Activated CD4-positive, alpha-beta memory T cell treated with anti-CD3 and anti-CD28 coated beads for 36 hours (primary cell): ENCODE measurements at regions of chr1 and their contacts with region 1.

Region 1: DNA sequence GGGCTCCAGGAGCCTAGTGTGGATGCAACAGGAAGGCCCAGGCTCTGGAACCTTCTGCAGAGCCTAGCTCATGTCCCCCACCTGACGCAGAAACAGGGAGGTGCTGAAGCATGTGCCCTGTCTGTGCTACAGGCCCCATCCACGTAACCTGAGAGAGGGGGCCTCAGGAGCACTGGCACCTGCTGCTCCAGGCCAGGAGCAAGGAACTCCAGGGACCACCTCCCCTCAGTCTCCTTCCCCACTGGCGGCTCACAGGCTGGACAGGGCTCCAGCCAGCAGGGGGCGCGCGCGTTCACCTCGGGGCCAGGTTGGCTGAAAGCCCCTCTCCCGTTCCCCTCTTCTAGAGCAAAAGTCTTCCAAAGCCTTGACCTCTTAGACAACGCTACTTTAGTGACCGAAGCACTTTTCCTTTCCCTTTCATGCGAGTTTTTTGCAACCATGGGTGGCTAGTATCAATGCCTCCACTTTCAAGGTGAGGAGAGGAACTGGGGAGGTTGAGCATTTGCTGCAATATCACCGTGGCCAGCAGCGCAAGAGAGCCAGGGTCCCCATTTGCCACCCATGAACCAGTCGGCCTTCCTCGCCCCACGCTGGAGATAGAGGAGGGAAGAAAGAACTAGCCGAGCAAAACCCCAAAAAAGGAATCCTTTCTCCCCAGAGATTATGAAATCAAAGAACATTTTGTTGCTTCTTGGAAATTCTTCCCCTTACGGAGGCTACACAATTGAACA is 52.4 kb upstream of the GPR157 start:
- DNase-seq: peak; percentile 77
- H3K4me3 Mint-ChIP-seq: peak overlapping the region; percentile 79
- H3K27ac Mint-ChIP-seq: no peak overlapping the region
- H3K4me1 Mint-ChIP-seq: peaks cover 7% of the 10 kb centered on the region
- H3K27me3 Mint-ChIP-seq: peaks cover 22% of the 10 kb centered on the region

Region 2: GRCh38 chr1:9086045-9086444 is 95.3 kb before region 1 on chr1:
- CTCF ChIA-PET with region 1: no interaction called
- POLR2A ChIA-PET with region 1: no interaction called
- intact Hi-C with region 1: no loop called
- DNase-seq: no peak
- H3K4me3 Mint-ChIP-seq: no peak overlapping the region
- H3K27ac Mint-ChIP-seq: no peak overlapping the region
- H3K4me1 Mint-ChIP-seq: no peaks in the 10 kb centered on the region
- H3K27me3 Mint-ChIP-seq: peaks cover 14% of the 10 kb centered on the region

Region 3: GRCh38 chr1:9135073-9135836 is 46.1 kb before region 1 on chr1:
- CTCF ChIA-PET with region 1: interaction called, 17 read pairs
- POLR2A ChIA-PET with region 1: no interaction called
- intact Hi-C with region 1: no loop called
- DNase-seq: no peak
- H3K4me3 Mint-ChIP-seq: no peak overlapping the region
- H3K27ac Mint-ChIP-seq: no peak overlapping the region
- H3K4me1 Mint-ChIP-seq: peaks cover 13% of the 10 kb centered on the region
- H3K27me3 Mint-ChIP-seq: peaks cover 3% of the 10 kb centered on the region

Region 4: GRCh38 chr1:9196129-9197040 is 15.0 kb after region 1 on chr1:
- CTCF ChIA-PET with region 1: interaction called, 15 read pairs
- POLR2A ChIA-PET with region 1: no interaction called
- intact Hi-C with region 1: loop called (anchors 2 kb)
- DNase-seq: peak; percentile 80
- H3K4me3 Mint-ChIP-seq: no peak overlapping the region
- H3K27ac Mint-ChIP-seq: no peak overlapping the region
- H3K4me1 Mint-ChIP-seq: peaks cover 16% of the 10 kb centered on the region
- H3K27me3 Mint-ChIP-seq: peaks cover 50% of the 10 kb centered on the region

Region 5: GRCh38 chr1:9234223-9235095 is 53.1 kb after region 1 on chr1 and contains the start of gene H6PD:
- CTCF ChIA-PET with region 1: interaction called, 10 read pairs
- POLR2A ChIA-PET with region 1: no interaction called
- intact Hi-C with region 1: no loop called
- DNase-seq: peak; percentile 77
- H3K4me3 Mint-ChIP-seq: peak within 1 kb of the TSS; percentile 86
- H3K27ac Mint-ChIP-seq: peak within 1 kb of the TSS; percentile 88
- H3K4me1 Mint-ChIP-seq: peaks cover 37% of the 10 kb centered on the region
- H3K27me3 Mint-ChIP-seq: no peaks in the 10 kb centered on the region
- total RNA-seq, gene H6PD: 9.3 to 10.4 TPM

Region 6: DNA sequence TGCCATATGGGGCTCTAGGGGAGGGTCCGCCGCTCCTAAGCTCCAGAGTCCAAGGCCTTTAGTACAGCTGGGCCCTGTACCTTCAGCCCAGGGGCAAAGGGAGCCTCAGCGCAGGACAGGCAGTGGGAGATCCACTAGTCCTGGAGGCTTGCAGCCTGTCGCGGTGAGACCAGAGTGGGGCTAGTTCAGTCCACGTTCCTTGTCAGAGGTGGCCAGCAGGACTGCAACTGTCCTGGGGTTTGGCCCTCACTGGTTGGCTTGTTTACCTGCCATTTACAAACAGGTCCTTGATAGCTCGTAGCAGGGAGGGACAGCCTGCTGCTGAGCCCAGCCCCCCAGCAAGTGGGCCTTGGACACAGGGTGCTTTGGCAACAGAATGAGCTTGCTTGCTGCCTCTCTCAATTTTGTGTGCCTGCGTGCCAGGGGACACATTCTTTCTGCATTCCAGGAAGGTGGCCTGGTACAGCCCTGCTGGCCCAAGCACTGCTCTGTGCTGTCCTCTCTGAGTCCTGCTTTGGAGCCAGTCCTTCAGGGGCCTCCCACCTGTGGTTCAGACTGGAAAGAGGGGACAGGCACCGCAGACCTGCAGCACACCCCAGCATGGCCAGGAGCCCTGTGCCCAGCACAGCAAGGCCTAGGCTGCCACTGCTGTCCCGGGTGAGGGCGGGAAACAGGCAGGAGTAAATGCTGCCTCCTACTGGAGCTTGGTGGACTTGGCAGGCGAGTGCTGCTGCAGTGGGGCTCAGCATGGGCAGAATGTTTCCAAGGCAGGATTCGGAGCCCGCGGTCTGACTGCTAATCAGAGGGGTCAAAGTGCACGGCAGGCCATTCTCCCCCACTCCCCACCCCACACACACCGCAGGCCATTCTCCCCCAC is 68.4 kb after region 1 on chr1:
- CTCF ChIA-PET with region 1: interaction called, 11 read pairs
- POLR2A ChIA-PET with region 1: no interaction called
- intact Hi-C with region 1: no loop called
- DNase-seq: peak; percentile 59
- H3K4me3 Mint-ChIP-seq: no peak overlapping the region
- H3K27ac Mint-ChIP-seq: no peak overlapping the region
- H3K4me1 Mint-ChIP-seq: peaks cover 2% of the 10 kb centered on the region
- H3K27me3 Mint-ChIP-seq: no peaks in the 10 kb centered on the region